ENCODE measurements at regions of chr4 and their contacts with region 1.

Region 1: DNA sequence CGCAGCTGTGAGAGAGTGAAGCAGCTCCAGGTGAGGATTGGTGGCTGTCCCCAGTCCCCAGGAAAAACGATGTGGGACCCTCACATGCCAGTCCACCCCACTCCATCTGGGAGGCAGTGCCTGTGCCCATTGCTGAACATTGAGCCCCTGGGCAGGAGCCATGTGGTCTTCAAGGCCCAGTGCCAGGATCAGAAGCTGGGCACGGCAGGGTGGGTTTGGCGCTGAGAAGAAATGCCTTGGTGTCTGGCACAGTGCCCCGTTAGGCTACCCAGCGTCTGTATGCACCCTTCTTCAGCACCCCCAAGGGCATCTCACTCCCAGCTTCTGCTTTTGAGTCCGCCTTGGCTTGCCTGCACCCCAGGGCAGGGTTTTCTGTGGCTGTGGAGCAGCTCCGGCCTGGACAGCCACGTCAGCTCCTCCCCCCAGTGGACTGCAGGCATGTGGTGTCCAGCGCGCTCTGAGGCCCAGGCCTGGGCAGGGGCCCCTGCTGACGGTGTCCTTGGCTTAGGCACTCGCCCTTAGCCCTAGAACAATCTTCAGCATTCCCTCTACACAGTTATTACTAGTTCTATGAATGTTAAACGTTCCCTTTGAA is 28.6 kb downstream of the RGS12 start:
- DNase-seq: peak; percentile 69 to 85 (median 79)
- H3K4me3 ChIP-seq: no peak overlapping the region
- H3K27ac ChIP-seq: peak overlapping the region in 1 of 2 donors; percentile 71
- H3K4me1 ChIP-seq: peaks cover 14% of the 10 kb centered on the region
- H3K27me3 ChIP-seq: no peaks in the 10 kb centered on the region
- CTCF ChIP-seq: no peak
- EP300 ChIP-seq: no peak
- POLR2A ChIP-seq: no peak

Region 2: GRCh38 chr4:3292571-3293400 is 28.6 kb before region 1 on chr4 and contains the start of gene RGS12:
- intact Hi-C with region 1: loop called in 1 of 4 experiments (anchors 2 kb)
- DNase-seq: peak; percentile 96 to 97 (median 96)
- H3K4me3 ChIP-seq: peak within 1 kb of the TSS; percentile 99
- H3K27ac ChIP-seq: peak within 1 kb of the TSS; percentile 83 to 95
- H3K4me1 ChIP-seq: peaks cover 5% of the 10 kb centered on the region
- H3K27me3 ChIP-seq: no peaks in the 10 kb centered on the region
- CTCF ChIP-seq: no peak
- EP300 ChIP-seq: no peak
- POLR2A ChIP-seq: peak; percentile 86
- total RNA-seq, gene RGS12: 15.3 to 50.7 (median 42.1) TPM